ENCODE measurements at regions of chr17 and their contacts with region 1.

Region 1: DNA sequence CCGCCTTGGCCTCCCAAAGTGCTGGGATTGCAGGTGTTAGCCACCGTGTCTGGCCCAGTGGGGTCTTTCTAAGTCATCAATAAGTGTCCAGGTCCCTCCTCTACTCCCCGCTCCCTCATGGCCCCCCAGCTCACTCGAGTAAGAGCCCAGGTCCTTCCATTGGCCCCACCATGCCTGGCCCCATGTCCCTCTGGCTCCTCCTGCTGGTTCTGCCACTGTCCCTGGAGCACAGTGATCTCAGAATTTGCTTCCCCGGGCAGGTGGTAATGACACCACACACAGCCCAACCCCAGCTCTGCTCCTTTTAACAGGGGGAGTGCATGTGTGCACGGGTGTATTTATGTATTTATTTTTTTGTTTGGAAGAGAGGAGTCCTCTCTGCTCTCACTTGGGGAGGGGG is 19.6 kb downstream of the MGAT5B start:
- DNase-seq: no peak
- ATAC-seq: no peak
- H3K4me3 ChIP-seq: no peak overlapping the region
- H3K27ac ChIP-seq: no peak overlapping the region
- H3K4me1 ChIP-seq: no peaks in the 10 kb centered on the region
- H3K27me3 ChIP-seq: no peaks in the 10 kb centered on the region
- CTCF ChIP-seq: no peak

Region 2: DNA sequence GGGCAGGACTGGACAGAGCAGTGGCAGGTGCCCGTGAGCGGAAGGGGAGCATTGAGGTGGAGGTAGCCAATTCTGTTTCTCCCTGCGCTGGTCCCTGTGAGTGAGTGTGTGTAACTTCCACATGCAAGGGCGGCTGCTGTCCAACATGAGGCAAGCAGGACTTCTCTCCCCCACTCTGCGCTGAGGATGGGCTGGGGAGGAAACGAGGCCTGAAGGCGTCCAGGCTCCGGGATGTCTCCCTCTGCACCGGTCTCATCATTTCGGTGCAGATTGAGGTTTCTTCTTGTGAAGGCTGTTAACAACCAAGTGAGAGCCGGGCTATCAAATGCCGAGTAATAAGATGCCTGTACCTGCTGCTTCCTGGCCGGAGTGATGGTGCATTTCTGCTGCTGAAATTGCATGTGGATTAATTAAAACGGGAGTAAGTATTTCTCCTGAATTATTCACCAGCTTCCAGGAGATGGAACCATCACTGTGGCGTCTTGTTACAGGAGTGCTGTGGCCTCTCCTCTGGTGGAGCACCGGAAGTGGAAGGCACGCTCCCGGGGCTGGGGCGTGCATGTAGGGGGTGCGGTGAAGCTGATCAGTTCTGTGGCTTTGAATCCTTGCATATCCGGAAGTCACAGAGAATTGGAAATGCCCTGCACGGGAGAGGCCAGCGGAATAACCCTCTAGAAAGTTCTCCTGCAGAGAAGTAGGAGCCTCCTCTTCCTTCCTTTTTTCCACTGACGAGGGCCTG is 61.3 kb before region 1 on chr17:
- intact Hi-C with region 1: no loop called
- DNase-seq: no peak
- ATAC-seq: no peak
- H3K4me3 ChIP-seq: no peak overlapping the region
- H3K27ac ChIP-seq: no peak overlapping the region
- H3K4me1 ChIP-seq: no peaks in the 10 kb centered on the region
- H3K27me3 ChIP-seq: no peaks in the 10 kb centered on the region
- CTCF ChIP-seq: no peak

Region 3: GRCh38 chr17:76940738-76941350 is 53.0 kb after region 1 on chr17:
- intact Hi-C with region 1: loop called (anchors 10 kb)
- DNase-seq: no peak
- ATAC-seq: no peak
- H3K4me3 ChIP-seq: no peak overlapping the region
- H3K27ac ChIP-seq: no peak overlapping the region
- H3K4me1 ChIP-seq: no peaks in the 10 kb centered on the region
- H3K27me3 ChIP-seq: peaks cover 6% of the 10 kb centered on the region
- CTCF ChIP-seq: peak; percentile 9

Region 4: DNA sequence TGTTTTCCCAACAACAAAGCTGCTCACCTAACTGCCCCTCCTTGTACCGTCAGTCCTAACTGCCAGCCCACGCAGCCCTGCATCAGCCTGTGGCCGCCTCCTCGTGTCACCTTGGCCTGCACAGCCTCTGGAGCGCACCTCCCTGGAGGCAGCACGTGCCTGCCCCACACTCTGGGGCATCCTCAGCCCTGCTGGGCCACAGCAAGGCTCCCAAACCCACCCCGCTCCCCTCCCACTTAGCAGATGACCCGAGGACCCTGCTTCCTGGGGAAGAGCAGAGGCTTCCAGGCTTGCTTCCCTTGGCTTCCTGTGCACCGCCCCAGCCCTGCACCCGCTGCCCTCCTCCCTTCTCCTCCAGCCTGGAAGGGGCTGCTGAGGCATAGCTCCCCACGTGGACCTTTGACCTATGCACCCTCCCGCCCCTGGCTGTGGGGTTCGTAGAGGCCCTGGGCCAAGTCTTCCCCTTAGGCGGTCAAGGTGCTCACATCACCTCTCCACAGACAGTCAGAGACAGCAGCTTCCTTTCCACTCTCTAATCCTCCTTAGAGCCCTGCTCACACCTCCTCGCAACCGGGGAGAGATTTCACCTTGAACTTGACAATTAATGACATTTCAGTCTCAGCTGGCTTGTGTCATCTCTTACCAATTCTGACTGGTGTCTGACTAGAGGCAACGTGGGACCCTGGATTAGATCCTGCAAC is 95.4 kb after region 1 on chr17:
- intact Hi-C with region 1: no loop called
- DNase-seq: no peak
- ATAC-seq: peak; percentile 34
- H3K4me3 ChIP-seq: no peak overlapping the region
- H3K27ac ChIP-seq: no peak overlapping the region
- H3K4me1 ChIP-seq: no peaks in the 10 kb centered on the region
- H3K27me3 ChIP-seq: no peaks in the 10 kb centered on the region
- CTCF ChIP-seq: no peak

Measured in upper lobe of right lung (tissue), 1 donor.